Transverse colon (tissue), 4 donors: ENCODE measurements at regions of chr20 and their contacts with region 1.

Region 1: DNA sequence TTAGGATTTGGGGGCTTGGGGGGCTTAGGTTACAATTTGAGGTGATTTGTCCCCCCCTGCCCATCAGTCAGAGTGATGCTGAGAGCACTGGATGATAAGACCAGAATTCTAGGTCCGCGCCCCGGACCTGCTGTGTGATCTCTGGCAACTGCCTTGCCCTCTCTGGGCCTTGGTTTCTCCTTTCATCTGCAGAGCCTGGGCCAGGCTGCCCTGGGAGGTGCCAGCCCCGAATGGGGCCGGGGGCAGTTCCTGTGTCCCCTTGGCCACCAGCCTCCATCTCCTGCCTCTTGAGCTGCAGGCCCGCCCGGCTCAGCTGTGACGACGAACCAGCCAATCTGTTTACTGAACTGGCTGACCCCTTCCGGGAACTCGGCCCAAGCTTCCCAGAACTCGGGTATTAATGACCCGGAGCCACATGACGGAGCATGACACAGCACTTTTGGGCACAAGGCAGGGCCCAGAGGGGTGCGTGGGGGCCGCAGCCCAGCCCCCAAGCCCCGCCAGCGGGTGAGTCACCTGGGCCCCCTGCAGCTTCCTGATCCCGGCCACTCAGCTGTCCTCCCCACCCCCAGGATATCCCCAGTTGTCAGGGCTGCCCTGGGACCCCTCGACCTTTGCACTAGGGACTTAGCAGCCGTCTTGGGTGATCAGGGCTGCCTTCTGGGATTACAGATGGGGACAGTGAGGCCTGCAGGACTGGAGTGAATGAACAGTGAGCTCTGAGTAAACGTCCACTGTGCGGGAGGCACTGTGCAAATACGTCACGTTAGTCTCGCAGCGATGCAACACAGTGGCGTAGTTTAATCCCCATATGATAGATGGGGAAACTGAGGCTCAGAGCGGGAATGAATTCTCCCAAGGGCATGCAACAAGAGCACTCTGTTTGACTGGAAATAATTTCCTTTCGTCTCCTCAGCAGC is 102.0 kb downstream of the CEBPB start:
- DNase-seq: peak; percentile 83
- H3K4me3 ChIP-seq: no peak overlapping the region
- H3K27ac ChIP-seq: peak overlapping the region; percentile 65 to 77 (median 74)
- H3K4me1 ChIP-seq: peaks cover 9 to 20% (median 16%) of the 10 kb centered on the region in 4 donors
- H3K27me3 ChIP-seq: no peaks in the 10 kb centered on the region
- CTCF ChIP-seq: no peak
- EP300 ChIP-seq: peak; percentile 97
- POLR2A ChIP-seq: no peak

Region 2: DNA sequence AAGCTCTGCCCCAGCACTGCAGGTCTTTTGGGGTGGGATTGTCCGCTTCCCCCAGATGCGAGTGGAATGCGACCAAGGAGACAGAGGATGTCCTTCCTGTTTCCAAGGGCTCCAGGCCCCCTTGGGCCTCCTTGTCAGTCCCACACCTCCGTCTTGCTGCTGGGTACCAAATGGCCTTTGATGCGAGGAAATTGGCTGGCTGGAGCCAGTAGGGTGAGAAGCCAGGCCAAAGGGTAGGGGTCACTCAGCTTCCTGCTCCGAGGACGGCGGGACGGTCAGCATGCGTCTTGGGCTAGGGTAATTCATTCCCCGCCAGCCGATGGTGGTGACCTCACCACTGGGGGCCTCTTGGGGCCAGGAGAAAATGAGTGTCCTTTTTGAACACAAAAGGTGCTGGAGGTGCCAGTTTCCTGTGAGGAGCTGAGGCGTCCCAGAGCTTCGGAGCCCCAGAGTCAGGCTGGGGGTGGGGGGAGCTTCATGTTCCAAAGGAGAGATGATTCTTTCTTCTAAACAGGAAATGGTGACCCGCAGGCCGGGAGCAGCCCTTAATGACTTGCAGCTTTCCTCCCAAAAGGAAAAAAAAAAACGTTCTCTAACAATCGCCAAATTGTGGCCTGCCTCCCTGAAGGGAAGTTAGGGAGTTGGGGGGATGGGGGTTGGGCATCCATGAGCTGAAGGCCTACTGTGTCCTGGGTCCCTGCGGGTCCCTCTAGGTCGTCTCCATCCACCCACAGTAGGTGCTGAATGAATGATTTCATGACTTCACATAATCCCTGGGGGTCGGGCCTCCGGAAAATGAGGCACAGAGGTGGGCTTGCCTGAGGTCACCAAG is 303.1 kb before region 1 on chr20:
- in situ Hi-C with region 1: no loop called
- intact Hi-C with region 1: no loop called
- DNase-seq: peak; percentile 27
- H3K4me3 ChIP-seq: no peak overlapping the region
- H3K27ac ChIP-seq: peak overlapping the region; percentile 35 to 79 (median 77)
- H3K4me1 ChIP-seq: peaks cover 3 to 40% (median 11%) of the 10 kb centered on the region in 4 donors
- H3K27me3 ChIP-seq: no peaks in the 10 kb centered on the region
- CTCF ChIP-seq: no peak
- EP300 ChIP-seq: no peak
- POLR2A ChIP-seq: no peak

Region 3: DNA sequence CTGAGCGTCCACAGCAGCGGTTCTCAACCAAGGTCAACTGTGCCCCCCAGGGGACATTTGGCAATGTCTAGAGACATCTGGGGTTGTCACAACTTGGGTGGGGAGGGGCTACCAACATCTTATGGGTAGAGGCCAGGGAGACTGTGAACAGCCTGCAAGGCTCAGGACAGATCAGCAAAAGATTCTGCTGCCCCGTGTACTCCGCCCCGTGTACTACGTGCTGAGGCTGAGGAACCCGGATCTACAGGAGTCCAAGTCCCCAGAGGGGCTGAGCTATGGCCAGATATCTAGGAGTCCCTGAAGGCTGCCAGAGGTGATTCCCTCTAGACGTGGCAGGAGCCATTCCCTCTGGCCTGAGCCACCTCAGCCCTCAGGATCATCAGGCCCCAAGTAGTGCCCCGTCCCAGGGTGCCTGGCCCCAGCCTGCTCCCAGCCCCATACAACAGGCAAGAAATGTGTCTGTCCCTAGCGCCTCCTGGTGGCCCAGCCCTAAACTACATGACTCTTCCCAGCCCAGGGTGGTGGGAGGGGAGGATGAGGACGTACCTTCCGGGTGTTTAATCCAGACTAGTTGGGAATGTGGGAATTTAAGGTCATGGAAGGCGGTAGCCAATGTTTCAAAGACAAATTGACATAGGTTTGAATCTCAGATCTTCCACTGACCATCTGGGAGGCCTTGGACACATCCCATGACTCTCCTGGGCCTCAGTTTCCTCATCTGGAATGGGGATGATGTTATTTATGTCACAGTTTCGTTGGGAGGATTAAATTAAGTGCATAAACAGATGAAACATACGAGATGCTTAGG is 168.1 kb after region 1 on chr20:
- in situ Hi-C with region 1: loop called in 1 of 4 experiments (anchors 25 kb)
- intact Hi-C with region 1: no loop called
- DNase-seq: peak; percentile 92
- H3K4me3 ChIP-seq: no peak overlapping the region
- H3K27ac ChIP-seq: peak overlapping the region; percentile 58 to 73 (median 66)
- H3K4me1 ChIP-seq: peaks cover 4 to 18% (median 16%) of the 10 kb centered on the region in 4 donors
- H3K27me3 ChIP-seq: no peaks in the 10 kb centered on the region
- CTCF ChIP-seq: peak; percentile 88 to 99 (median 95)
- EP300 ChIP-seq: no peak
- POLR2A ChIP-seq: no peak